CD8-positive, alpha-beta T cell (primary cell): ENCODE measurements at regions of chr7 and their contacts with region 1.

Region 1: GRCh38 chr7:100852048-100852872 is at the start of gene SLC12A9:
- DNase-seq: peak; percentile 67 to 93 (median 85)
- ATAC-seq: peak; percentile 92
- H3K4me3 ChIP-seq: peak within 1 kb of the TSS; percentile 84 to 98
- H3K4me3 Mint-ChIP-seq: peak within 1 kb of the TSS; percentile 88
- H3K27ac ChIP-seq: peak within 1 kb of the TSS; percentile 42 to 64
- H3K27ac Mint-ChIP-seq: peak within 1 kb of the TSS; percentile 90
- H3K4me1 ChIP-seq: peaks cover 18% of the 10 kb centered on the region
- H3K4me1 Mint-ChIP-seq: peaks cover 20% of the 10 kb centered on the region
- H3K27me3 ChIP-seq: no peaks in the 10 kb centered on the region
- H3K27me3 Mint-ChIP-seq: no peaks in the 10 kb centered on the region
- CTCF ChIP-seq: peak; percentile 85
- total RNA-seq, gene SLC12A9: 23.4 to 26.6 TPM

Region 2: DNA sequence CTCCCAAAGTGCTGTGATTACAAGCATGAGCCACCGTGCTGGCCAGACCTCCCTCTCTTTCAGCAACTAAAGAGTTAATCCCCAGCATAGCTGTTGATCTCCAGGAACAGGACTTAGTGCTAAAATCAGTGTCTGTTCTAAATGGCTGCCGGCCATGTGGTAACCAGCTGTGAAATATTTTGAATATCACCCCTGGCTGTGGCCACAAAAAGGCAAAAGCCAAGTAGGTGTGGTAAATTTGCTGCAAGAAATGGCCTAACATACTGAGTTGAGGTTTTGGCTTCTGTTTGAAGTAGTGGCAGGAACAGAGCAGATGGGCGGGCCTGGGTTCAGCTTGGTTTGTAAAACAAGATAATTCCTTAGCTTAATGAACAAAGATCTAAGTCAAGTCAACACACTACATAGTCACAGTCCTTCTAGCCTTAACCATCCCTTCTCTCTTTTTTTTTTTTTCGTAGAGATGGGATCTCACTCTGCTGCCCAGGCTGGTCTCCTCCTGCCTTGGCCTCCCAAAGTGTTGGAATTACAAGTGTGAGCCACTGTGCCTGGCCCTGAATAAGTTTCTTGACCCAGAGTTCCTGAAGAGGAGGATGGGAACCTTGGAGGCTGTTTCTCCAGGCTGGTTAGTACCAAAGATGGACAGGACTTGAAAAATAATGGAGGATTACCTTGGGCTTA is 336.0 kb before region 1 on chr7:
- CTCF ChIA-PET with region 1: no interaction called
- POLR2A ChIA-PET with region 1: no interaction called
- intact Hi-C with region 1: no loop called
- DNase-seq: peak; percentile 36 to 87 (median 61)
- ATAC-seq: peak; percentile 92
- H3K4me3 ChIP-seq: peak overlapping the region in 1 of 2 experiments; percentile 5
- H3K4me3 Mint-ChIP-seq: peak overlapping the region; percentile 73
- H3K27ac ChIP-seq: peak overlapping the region in 1 of 2 experiments; percentile 9
- H3K27ac Mint-ChIP-seq: peak overlapping the region; percentile 83
- H3K4me1 ChIP-seq: peaks cover 30% of the 10 kb centered on the region
- H3K4me1 Mint-ChIP-seq: peaks cover 42% of the 10 kb centered on the region
- H3K27me3 ChIP-seq: peaks cover 0 to 3% of the 10 kb centered on the region in 2 experiments
- H3K27me3 Mint-ChIP-seq: no peaks in the 10 kb centered on the region
- CTCF ChIP-seq: no peak

Region 3: GRCh38 chr7:100586266-100587025 is 265.8 kb before region 1 on chr7 and contains the start of gene FBXO24:
- CTCF ChIA-PET with region 1: interaction called, 5 read pairs
- POLR2A ChIA-PET with region 1: interaction called, 3 read pairs
- intact Hi-C with region 1: loop called in 1 of 2 experiments (anchors 5 kb)
- DNase-seq: peak; percentile 98 to 100 (median 99)
- ATAC-seq: peak; percentile 80
- H3K4me3 ChIP-seq: peak within 1 kb of the TSS; percentile 93 to 96
- H3K4me3 Mint-ChIP-seq: peak within 1 kb of the TSS; percentile 96
- H3K27ac ChIP-seq: peak within 1 kb of the TSS; percentile 74 to 94
- H3K27ac Mint-ChIP-seq: peak within 1 kb of the TSS; percentile 57
- H3K4me1 ChIP-seq: peaks cover 22% of the 10 kb centered on the region
- H3K4me1 Mint-ChIP-seq: peaks cover 39% of the 10 kb centered on the region
- H3K27me3 ChIP-seq: no peaks in the 10 kb centered on the region
- H3K27me3 Mint-ChIP-seq: peaks cover 3% of the 10 kb centered on the region
- CTCF ChIP-seq: no peak
- total RNA-seq, gene FBXO24: 0.30 to 0.53 TPM

Region 4: GRCh38 chr7:100611974-100612729 is 240.1 kb before region 1 on chr7 and contains the start of gene MOSPD3:
- CTCF ChIA-PET with region 1: interaction called, 5 read pairs
- POLR2A ChIA-PET with region 1: no interaction called
- intact Hi-C with region 1: loop called in 1 of 2 experiments (anchors 2 kb)
- DNase-seq: peak; percentile 96 to 100 (median 98)
- ATAC-seq: peak; percentile 89
- H3K4me3 ChIP-seq: peak within 1 kb of the TSS; percentile 68 to 96
- H3K4me3 Mint-ChIP-seq: peak within 1 kb of the TSS; percentile 99
- H3K27ac ChIP-seq: peak within 1 kb of the TSS; percentile 93 to 98
- H3K27ac Mint-ChIP-seq: peak within 1 kb of the TSS; percentile 100
- H3K4me1 ChIP-seq: peaks cover 19% of the 10 kb centered on the region
- H3K4me1 Mint-ChIP-seq: peaks cover 24% of the 10 kb centered on the region
- H3K27me3 ChIP-seq: no peaks in the 10 kb centered on the region
- H3K27me3 Mint-ChIP-seq: no peaks in the 10 kb centered on the region
- CTCF ChIP-seq: no peak
- total RNA-seq, gene MOSPD3: 10.3 to 10.5 TPM

Region 5: DNA sequence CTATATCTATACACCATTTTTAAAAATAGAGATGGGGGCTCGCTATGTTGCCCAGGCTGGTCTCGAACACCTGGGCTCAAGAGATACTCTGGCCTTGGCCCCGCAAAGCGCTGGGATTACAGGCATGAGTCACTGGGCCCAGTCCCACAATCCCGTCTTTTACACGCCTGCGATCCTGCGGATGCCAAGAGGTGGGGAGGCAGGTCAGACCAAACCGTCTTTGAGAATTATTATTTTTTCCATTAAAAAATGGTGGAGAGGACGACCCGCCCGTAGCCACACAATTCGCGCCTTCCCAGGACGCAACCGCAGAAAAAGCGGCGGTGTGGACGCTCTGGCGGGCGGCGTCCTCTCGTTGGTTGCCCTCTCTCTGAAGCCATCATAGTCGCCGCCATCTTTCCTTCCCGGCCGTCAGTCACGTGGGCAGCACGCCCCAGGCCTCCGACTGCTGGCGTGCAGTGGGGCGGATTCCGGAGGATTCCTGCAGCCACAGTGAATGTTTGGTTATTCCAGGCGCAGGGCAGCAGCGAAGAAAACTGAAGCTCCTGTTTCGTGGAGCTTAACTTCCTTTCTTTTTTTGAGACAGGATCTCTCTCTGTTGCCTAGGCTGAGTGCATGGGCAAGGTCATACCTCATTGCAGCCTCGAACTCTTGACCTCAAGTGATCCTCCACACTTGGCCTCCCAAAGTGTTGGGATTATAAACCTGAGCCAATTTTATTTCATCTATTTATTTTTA is 15.0 kb before region 1 on chr7:
- CTCF ChIA-PET with region 1: interaction called, 5 read pairs
- POLR2A ChIA-PET with region 1: interaction called, 3 read pairs
- intact Hi-C with region 1: loop called (anchors 1 kb)
- DNase-seq: peak; percentile 54 to 88 (median 78)
- ATAC-seq: peak; percentile 95
- H3K4me3 ChIP-seq: peak overlapping the region; percentile 50 to 64
- H3K4me3 Mint-ChIP-seq: peak overlapping the region; percentile 82
- H3K27ac ChIP-seq: peak overlapping the region; percentile 22 to 30
- H3K27ac Mint-ChIP-seq: peak overlapping the region; percentile 74
- H3K4me1 ChIP-seq: peaks cover 4% of the 10 kb centered on the region
- H3K4me1 Mint-ChIP-seq: peaks cover 8% of the 10 kb centered on the region
- H3K27me3 ChIP-seq: no peaks in the 10 kb centered on the region
- H3K27me3 Mint-ChIP-seq: no peaks in the 10 kb centered on the region
- CTCF ChIP-seq: no peak

Region 6: DNA sequence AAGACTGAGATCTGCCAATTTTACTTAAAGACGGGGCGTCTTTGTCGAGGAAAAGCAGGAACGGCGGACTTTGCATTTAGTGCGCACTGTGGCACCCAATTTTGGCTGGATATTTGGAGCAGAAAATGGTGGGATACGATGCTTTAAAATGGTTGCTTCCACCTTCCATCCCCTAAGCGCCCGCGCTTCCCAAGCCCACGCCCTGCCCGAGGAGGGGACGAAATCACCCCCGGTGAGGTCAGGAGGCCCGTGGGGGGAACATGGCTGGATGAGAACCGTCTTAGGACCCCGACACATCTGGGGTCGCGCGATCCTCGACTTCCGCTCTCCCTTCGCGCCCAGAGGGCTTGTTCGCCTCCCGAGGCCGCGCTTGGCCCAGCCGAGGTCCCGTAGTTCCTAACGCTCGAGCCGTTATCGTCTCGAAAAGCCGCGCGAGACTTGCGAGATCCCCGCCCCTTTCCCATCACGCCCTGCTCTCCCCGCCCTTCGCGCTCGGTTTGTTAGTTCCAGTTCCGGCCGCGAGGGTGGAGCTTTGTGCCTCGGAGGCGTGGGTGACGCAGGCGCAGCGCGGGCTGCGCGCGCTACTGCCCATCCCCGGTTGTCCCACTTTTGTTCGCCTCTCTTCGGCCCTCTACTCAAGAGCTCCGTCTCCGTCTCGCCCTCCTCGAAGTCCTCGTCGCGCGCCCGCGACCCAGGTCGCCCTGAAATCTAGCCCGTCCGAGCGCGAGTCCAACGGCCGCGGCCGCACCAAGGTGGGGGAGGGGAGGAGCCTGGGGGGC is 22.5 kb after region 1 on chr7 and contains the start of gene SRRT:
- CTCF ChIA-PET with region 1: interaction called, 5 read pairs
- POLR2A ChIA-PET with region 1: interaction called, 21 read pairs
- intact Hi-C with region 1: loop called (anchors 1 kb)
- DNase-seq: peak; percentile 97 to 99 (median 98)
- ATAC-seq: peak; percentile 97
- H3K4me3 ChIP-seq: peak within 1 kb of the TSS; percentile 75 to 94
- H3K4me3 Mint-ChIP-seq: peak within 1 kb of the TSS; percentile 98
- H3K27ac ChIP-seq: peak within 1 kb of the TSS; percentile 93 to 96
- H3K27ac Mint-ChIP-seq: peak within 1 kb of the TSS; percentile 99
- H3K4me1 ChIP-seq: peaks cover 41% of the 10 kb centered on the region
- H3K4me1 Mint-ChIP-seq: peaks cover 43% of the 10 kb centered on the region
- H3K27me3 ChIP-seq: no peaks in the 10 kb centered on the region
- H3K27me3 Mint-ChIP-seq: no peaks in the 10 kb centered on the region
- CTCF ChIP-seq: no peak
- total RNA-seq, gene SRRT: 491 to 496 TPM

Region 7: GRCh38 chr7:101669307-101669706 is 817.0 kb after region 1 on chr7:
- CTCF ChIA-PET with region 1: no interaction called
- POLR2A ChIA-PET with region 1: no interaction called
- intact Hi-C with region 1: no loop called
- DNase-seq: no peak
- ATAC-seq: no peak
- H3K4me3 ChIP-seq: no peak overlapping the region
- H3K4me3 Mint-ChIP-seq: no peak overlapping the region
- H3K27ac ChIP-seq: no peak overlapping the region
- H3K27ac Mint-ChIP-seq: no peak overlapping the region
- H3K4me1 ChIP-seq: no peaks in the 10 kb centered on the region
- H3K4me1 Mint-ChIP-seq: no peaks in the 10 kb centered on the region
- H3K27me3 ChIP-seq: no peaks in the 10 kb centered on the region
- H3K27me3 Mint-ChIP-seq: peaks cover 7% of the 10 kb centered on the region
- CTCF ChIP-seq: no peak